HEK293T (cell line): ENCODE measurements at regions of chr1 and their contacts with region 1.

Region 1: DNA sequence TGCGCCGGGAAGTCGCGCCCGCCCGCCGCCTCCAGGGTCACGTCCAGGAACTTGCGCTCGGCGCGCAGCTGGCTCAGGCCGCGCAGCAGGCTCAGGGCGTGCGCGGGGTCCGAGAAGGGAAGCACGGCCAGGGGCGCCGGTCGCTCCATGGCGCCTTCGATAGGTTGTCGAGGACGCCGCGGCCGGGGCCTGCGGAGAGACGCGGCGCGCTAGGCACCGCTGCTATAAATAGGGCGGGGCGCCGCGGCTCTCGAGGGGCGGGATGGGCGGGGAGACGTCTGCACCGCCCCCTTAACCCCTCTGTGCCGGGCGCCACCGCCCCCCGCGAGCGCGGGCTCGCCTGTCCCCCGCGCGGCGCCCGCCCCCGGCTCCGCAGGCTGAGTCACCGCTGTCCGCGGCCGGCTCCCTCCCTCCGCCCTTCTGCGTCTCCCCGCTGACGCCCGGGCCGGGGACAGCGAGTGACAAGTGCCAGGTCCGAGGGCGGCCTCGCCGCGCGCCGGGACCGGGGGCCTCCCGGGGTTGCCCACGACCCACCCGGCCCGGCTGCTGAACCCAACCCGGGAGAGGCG is at the start of gene KLHL21:
- DNase-seq: peak; percentile 81

Region 2: DNA sequence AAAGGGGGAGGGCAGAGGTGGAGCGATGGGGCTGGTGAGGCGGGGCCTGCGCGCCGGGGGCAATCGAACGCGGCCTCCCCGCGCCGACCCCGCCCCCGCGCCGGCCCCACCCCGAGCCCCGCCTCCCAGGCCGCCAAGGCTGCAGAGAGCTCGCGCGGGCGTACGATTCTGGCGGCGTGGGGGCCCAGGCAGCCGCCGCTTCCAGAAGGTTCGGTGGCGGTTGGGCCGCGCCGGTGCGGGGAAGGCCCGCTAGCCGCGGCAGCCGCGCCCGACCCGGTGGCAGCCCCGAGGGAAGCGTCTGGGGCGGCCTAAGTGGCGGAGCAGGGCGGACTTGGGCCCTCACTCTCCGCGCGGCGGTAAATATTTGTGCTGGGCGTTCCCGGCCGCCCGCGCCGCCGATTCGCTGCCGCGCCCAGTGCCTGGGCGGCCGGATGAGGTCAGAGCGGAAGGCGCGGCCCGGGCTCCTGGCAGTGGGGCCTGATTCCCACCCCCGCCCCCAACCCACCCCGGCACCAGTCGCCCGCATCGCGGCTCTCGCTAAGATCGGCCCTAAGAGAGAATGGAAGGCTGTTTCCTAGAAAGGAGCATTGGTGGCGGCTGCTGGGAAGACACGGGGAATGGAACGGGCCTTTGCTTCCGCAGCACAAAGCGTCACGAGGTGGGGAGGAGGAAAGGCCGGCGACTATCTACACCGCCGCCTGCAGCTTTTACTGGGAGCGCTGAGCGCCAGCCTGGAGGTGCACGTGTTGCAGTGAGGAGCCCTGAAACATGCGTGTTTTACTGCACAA is 209.2 kb before region 1 on chr1 and contains the start of gene ACOT7:
- CTCF ChIA-PET with region 1: no interaction called
- POLR2A ChIA-PET with region 1: no interaction called
- DNase-seq: peak; percentile 92

Region 3: DNA sequence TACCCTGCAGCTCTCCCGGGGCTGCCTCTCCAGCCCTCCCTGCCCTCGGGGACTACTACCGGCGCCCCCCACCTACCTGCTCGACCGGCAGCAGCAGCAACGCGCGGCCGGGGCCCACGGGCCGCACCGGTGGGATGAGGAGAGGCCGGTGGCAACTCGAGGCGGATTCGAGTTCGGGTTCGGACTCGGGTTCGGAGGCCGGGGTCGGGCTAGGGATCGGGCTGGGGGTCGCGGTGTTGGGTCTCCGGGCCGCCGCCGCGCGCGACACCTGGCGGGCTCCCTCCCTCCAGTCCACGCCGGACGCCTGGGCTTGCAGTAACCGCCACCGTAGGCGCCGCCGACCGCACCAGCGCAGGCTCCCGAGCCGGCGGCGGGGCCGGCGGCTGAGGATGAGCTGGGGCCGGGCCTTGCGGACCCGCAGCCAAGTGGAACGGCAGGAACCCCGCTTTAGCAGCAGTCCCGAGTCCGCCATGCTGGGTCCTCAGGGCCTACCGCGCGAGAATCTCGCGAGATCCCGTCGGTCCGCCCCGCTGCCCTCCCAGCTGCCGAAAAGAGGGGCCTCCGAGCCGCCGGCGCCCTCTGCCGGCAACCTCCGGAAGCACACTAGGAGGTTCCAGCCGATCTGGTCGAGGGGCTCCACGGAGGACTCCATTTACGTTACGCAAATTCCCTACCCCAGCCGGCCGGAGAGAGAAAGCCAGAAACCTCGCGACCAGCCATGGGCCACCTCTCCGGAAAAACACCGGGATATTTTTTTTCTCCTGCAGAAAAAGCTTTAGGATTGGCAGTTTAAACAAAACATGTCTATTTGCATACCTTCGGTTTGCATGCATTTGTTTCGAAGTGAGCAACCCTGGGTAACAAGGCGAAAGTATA is 48.5 kb before region 1 on chr1 and contains the start of gene NOL9:
- CTCF ChIA-PET with region 1: interaction called, 3 read pairs
- POLR2A ChIA-PET with region 1: interaction called, 25 read pairs
- DNase-seq: peak; percentile 97

Region 4: GRCh38 chr1:6579374-6580118 is 23.2 kb before region 1 on chr1 and contains the start of gene ZBTB48:
- CTCF ChIA-PET with region 1: no interaction called
- POLR2A ChIA-PET with region 1: interaction called, 55 read pairs
- DNase-seq: peak; percentile 100

Region 5: GRCh38 chr1:6587261-6588005 is 15.3 kb before region 1 on chr1:
- CTCF ChIA-PET with region 1: no interaction called
- POLR2A ChIA-PET with region 1: interaction called, 55 read pairs
- DNase-seq: no peak

Region 6: DNA sequence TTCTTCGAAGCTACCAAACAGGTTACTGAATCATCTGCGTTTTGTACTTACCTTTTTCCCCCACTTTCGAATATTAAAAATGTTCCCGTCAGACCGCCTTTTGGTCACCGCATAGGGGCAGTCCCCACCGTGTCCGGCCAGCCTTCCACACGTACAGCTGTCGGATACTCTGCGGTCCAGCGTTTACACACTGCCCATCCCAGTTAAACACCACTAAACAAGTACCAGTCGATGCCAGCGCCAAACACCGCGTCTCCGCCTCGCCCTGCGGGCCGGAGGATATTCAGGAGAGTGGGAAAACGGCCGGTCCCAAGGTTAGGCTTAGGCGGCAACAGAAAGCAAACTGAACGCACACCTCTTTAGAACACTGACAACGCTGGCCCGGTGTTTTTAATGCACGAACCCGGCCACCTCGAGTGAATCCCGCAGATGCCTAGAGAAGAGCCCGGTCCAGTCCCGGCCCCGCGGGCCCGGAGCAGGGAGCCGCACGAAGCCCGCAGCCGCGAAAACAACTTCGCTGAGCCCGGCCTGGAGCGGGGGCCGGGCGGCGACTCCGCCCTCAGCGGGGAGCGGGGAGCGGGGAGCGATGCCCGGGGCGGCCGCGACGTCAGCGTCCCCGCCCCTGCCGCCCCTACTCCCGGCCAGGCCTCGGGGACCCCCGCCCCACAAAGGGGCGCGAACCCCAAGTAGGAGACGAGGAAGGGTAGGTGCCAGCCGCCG is 10.0 kb after region 1 on chr1:
- CTCF ChIA-PET with region 1: interaction called, 3 read pairs
- POLR2A ChIA-PET with region 1: interaction called, 16 read pairs
- DNase-seq: peak; percentile 63

Region 7: GRCh38 chr1:6743189-6744101 is 140.7 kb after region 1 on chr1:
- CTCF ChIA-PET with region 1: no interaction called
- POLR2A ChIA-PET with region 1: no interaction called
- DNase-seq: no peak

Region 8: GRCh38 chr1:6822530-6823359 is 220.0 kb after region 1 on chr1:
- CTCF ChIA-PET with region 1: no interaction called
- POLR2A ChIA-PET with region 1: no interaction called
- DNase-seq: peak; percentile 39